Heart left ventricle (tissue), 16 donors: ENCODE measurements at regions of chr12 and their contacts with region 1.

Region 1: DNA sequence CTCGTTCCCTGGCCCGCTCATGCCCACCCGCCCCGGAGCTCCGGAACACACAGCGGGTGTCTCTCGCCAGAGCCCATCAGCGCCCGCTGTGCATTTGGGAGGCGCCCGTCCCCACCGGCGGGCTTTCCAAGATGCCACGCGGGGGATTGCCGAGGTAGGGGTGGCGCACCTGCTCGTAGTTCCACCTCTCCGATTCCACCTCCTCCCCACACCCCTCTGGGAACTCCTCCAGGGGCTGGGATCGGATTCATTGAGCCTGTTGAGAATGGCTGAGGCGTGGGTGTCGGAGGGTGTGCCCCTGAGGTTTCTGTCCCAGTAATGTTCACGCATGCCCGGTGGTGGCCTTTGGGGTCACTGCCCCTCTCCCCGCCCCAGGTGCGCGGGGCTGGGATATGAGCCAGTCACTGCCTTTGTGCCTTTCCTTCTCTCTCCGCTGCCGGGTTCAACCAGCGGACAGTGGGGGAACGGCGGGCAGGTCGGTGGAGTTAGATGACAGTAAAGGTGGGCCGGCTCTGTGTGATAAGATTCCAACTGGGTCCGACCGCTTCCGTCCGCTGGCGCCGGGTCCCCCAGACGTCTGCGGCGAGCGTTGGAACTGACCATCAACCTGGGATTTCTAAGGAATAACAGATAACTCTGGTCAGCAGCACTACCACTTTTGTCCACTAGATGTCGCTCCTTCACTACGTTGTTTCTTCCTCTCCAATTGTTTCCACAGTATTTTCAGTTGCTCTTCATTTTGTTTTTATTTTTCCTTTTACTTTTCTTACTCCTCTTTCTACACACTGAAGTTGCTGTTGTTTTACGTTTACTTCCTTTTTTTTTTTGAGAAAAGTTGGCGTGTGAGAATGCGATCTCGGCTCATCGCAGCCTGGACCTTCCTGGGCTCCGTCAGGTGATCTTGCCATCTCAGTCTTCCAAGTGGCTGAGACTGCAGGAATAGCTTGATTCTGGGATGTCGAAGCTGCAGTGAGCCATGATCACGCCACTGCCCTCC is 178.1 kb upstream of the ALG10B start:
- DNase-seq: peak in 4 of 5 donors; percentile 51 to 64 (median 58)
- ATAC-seq: peak in 3 of 4 donors; percentile 48 to 71 (median 59)
- H3K4me3 ChIP-seq: peak overlapping the region in 10 of 12 donors; percentile 20 to 55 (median 36)
- H3K27ac ChIP-seq: no peak overlapping the region
- H3K4me1 ChIP-seq: peaks cover 0 to 11% (median 5%) of the 10 kb centered on the region in 12 donors
- H3K27me3 ChIP-seq: peaks cover 0 to 21% (median 10%) of the 10 kb centered on the region in 9 donors
- CTCF ChIP-seq: peak; percentile 94 to 99 (median 98)
- POLR2A ChIP-seq: no peak

Region 2: GRCh38 chr12:38316391-38317129 is 178.0 kb after region 1 on chr12 and contains the start of gene ALG10B:
- intact Hi-C with region 1: loop called in 9 of 10 experiments (anchors 1 to 5 kb)
- DNase-seq: peak; percentile 93 to 95 (median 94)
- ATAC-seq: peak; percentile 100
- H3K4me3 ChIP-seq: peak within 1 kb of the TSS; percentile 57 to 94 (median 76)
- H3K27ac ChIP-seq: peak within 1 kb of the TSS; percentile 57 to 88 (median 82)
- H3K4me1 ChIP-seq: peaks cover 0 to 17% (median 4%) of the 10 kb centered on the region in 12 donors
- H3K27me3 ChIP-seq: no peaks in the 10 kb centered on the region
- CTCF ChIP-seq: peak; percentile 62 to 87 (median 74)
- POLR2A ChIP-seq: no peak
- total RNA-seq, gene ALG10B: 2.0 to 8.0 (median 5.4) TPM